Aorta (tissue), 5 donors: ENCODE measurements at regions of chr2 and their contacts with region 1.

Region 1: GRCh38 chr2:17976871-17977746 is 98.6 kb downstream of the KCNS3 start:
- DNase-seq: peak in 1 of 2 donors; percentile 69
- ATAC-seq: peak; percentile 91
- H3K4me3 ChIP-seq: no peak overlapping the region
- H3K27ac ChIP-seq: peak overlapping the region; percentile 89 to 97
- H3K4me1 ChIP-seq: peaks cover 0 to 6% of the 10 kb centered on the region in 2 donors
- H3K27me3 ChIP-seq: no peaks in the 10 kb centered on the region

Region 2: GRCh38 chr2:17765408-17765807 is 211.7 kb before region 1 on chr2:
- intact Hi-C with region 1: no loop called
- DNase-seq: no peak
- ATAC-seq: no peak
- H3K4me3 ChIP-seq: no peak overlapping the region
- H3K27ac ChIP-seq: no peak overlapping the region
- H3K4me1 ChIP-seq: no peaks in the 10 kb centered on the region
- H3K27me3 ChIP-seq: no peaks in the 10 kb centered on the region

Region 3: DNA sequence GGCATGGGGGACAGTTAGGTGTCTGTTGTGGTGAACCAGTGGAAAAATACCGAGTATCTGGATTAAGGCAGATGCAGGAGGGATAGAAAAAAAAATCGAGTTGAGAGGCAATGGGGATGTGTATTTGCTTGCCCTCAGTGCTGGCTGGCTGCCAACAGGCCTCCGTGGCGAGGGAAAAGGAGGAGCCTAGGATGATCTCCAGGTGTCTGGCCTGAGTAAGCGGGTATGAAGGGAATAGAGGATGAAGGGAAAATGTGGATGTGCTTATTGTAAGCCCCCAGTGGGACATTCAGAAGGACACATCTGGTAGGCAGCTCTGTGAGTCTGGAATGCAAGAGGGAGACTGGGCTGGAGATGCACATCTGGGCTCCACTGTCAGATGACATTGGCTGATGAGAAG is 75.9 kb before region 1 on chr2:
- intact Hi-C with region 1: no loop called
- DNase-seq: no peak
- ATAC-seq: no peak
- H3K4me3 ChIP-seq: no peak overlapping the region
- H3K27ac ChIP-seq: no peak overlapping the region
- H3K4me1 ChIP-seq: no peaks in the 10 kb centered on the region
- H3K27me3 ChIP-seq: no peaks in the 10 kb centered on the region

Region 4: DNA sequence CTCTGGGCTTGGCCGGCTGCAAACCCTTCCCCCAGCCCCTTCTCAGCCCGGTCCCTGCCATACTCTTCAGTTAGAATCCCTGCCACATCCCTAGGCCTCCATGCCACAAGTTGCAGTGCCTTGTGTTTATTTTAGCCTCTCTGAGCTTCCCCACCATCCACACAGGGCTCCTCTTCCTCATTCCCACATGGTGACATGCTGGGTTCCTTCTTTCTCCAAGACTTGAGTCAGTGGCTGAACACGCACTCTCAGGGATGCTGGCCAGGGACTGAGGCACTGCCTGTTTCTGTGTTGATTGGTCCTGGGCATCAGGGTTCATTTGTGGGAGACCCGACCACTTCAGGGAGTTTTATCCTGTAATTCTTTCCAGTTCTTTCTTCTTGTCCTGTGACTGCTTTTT is 42.4 kb before region 1 on chr2:
- intact Hi-C with region 1: loop called in 1 of 2 experiments (anchors 5 kb)
- DNase-seq: peak; percentile 81 to 85
- ATAC-seq: peak; percentile 85
- H3K4me3 ChIP-seq: peak overlapping the region in 1 of 2 donors; percentile 5
- H3K27ac ChIP-seq: peak overlapping the region; percentile 88 to 89
- H3K4me1 ChIP-seq: peaks cover 5 to 7% of the 10 kb centered on the region in 2 donors
- H3K27me3 ChIP-seq: no peaks in the 10 kb centered on the region

Region 5: DNA sequence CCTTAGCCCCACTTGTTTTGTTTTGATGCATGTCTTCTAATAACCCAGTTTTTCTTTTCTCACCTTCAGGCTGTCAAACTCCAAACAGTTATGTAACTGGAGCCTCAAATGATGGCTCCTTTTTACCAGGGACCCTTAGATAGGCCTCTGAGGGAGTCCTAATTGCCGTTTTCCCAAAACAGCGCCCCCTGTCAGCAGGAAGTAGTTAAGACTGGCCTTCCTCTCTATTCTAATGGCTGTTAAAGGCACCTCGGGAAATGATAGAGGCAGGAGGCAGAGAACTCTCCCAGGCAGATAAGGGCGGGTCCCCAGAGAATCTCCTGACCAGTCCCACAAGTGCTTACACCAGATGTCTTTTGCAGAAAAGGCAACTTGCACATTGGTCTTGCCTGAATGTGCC is 24.6 kb after region 1 on chr2:
- intact Hi-C with region 1: no loop called
- DNase-seq: no peak
- ATAC-seq: no peak
- H3K4me3 ChIP-seq: no peak overlapping the region
- H3K27ac ChIP-seq: no peak overlapping the region
- H3K4me1 ChIP-seq: no peaks in the 10 kb centered on the region
- H3K27me3 ChIP-seq: no peaks in the 10 kb centered on the region